ENCODE measurements at regions of chr19 and their contacts with region 1.

Region 1: DNA sequence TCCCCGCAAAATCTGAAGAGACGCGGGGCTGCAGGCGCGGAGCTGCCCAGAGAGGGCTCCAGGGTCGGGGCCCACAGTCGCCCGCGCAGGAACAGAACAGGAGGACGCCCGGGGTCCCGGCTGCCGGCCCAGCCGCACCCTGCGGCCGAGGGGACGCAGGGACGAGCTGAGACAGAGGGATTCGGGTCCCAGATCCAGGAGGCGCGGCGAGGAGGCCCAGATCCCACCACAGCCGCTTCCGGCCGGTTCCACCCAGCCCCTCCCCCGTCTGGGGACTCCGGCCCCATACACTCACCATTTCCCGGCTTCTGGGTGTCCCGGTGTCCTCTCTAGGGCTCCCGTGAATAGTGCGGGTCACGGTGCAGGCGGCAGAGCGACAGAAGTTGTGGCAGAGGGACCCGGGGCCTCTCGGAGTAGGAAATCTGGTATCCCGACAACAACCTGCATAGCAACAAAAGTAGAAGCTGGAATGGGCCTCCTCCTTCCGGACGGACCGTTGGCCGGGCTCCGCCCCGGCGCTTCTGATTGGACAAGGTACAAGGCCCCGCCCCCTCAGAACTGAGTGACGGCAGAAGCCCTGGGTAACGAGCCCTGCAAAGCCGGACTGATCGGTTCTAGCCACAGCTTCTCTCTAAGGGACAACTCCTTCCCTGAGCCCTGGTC is at the start of gene ZNF20:
- DNase-seq: peak; percentile 74 to 94 (median 84)
- ATAC-seq: peak; percentile 85
- H3K4me3 ChIP-seq: peak within 1 kb of the TSS; percentile 97
- H3K4me3 Mint-ChIP-seq: peak within 1 kb of the TSS; percentile 88
- H3K27ac ChIP-seq: peak within 1 kb of the TSS in 1 of 2 donors; percentile 44
- H3K27ac Mint-ChIP-seq: peak within 1 kb of the TSS; percentile 47
- H3K4me1 ChIP-seq: peaks cover 36% of the 10 kb centered on the region
- H3K4me1 Mint-ChIP-seq: peaks cover 43% of the 10 kb centered on the region
- H3K27me3 ChIP-seq: no peaks in the 10 kb centered on the region
- H3K27me3 Mint-ChIP-seq: no peaks in the 10 kb centered on the region
- CTCF ChIP-seq: no peak
- total RNA-seq, gene ZNF20: 1.0 to 1.2 TPM

Region 2: GRCh38 chr19:11694533-11695439 is 445.2 kb before region 1 on chr19:
- CTCF ChIA-PET with region 1: no interaction called
- POLR2A ChIA-PET with region 1: no interaction called
- intact Hi-C with region 1: loop called in 1 of 2 experiments (anchors 5 kb)
- DNase-seq: peak; percentile 51 to 87 (median 74)
- ATAC-seq: peak; percentile 99
- H3K4me3 ChIP-seq: peak overlapping the region; percentile 60
- H3K4me3 Mint-ChIP-seq: peak overlapping the region; percentile 96
- H3K27ac ChIP-seq: no peak overlapping the region
- H3K27ac Mint-ChIP-seq: no peak overlapping the region
- H3K4me1 ChIP-seq: peaks cover 18% of the 10 kb centered on the region
- H3K4me1 Mint-ChIP-seq: peaks cover 16% of the 10 kb centered on the region
- H3K27me3 ChIP-seq: peaks cover 24 to 32% of the 10 kb centered on the region in 2 experiments
- H3K27me3 Mint-ChIP-seq: peaks cover 42% of the 10 kb centered on the region
- CTCF ChIP-seq: no peak

Region 3: GRCh38 chr19:11798391-11799330 is 341.4 kb before region 1 on chr19 and contains the start of gene ZNF491:
- CTCF ChIA-PET with region 1: interaction called, 10 read pairs
- POLR2A ChIA-PET with region 1: no interaction called
- intact Hi-C with region 1: loop called (anchors 1 kb)
- DNase-seq: peak; percentile 64 to 91 (median 80)
- ATAC-seq: peak; percentile 98
- H3K4me3 ChIP-seq: peak within 1 kb of the TSS; percentile 73
- H3K4me3 Mint-ChIP-seq: peak within 1 kb of the TSS; percentile 93
- H3K27ac ChIP-seq: peak within 1 kb of the TSS; percentile 17
- H3K27ac Mint-ChIP-seq: peak within 1 kb of the TSS; percentile 79
- H3K4me1 ChIP-seq: peaks cover 22% of the 10 kb centered on the region
- H3K4me1 Mint-ChIP-seq: peaks cover 22% of the 10 kb centered on the region
- H3K27me3 ChIP-seq: no peaks in the 10 kb centered on the region
- H3K27me3 Mint-ChIP-seq: no peaks in the 10 kb centered on the region
- CTCF ChIP-seq: no peak
- total RNA-seq, gene ZNF491: 0.41 to 1.1 TPM

Region 4: DNA sequence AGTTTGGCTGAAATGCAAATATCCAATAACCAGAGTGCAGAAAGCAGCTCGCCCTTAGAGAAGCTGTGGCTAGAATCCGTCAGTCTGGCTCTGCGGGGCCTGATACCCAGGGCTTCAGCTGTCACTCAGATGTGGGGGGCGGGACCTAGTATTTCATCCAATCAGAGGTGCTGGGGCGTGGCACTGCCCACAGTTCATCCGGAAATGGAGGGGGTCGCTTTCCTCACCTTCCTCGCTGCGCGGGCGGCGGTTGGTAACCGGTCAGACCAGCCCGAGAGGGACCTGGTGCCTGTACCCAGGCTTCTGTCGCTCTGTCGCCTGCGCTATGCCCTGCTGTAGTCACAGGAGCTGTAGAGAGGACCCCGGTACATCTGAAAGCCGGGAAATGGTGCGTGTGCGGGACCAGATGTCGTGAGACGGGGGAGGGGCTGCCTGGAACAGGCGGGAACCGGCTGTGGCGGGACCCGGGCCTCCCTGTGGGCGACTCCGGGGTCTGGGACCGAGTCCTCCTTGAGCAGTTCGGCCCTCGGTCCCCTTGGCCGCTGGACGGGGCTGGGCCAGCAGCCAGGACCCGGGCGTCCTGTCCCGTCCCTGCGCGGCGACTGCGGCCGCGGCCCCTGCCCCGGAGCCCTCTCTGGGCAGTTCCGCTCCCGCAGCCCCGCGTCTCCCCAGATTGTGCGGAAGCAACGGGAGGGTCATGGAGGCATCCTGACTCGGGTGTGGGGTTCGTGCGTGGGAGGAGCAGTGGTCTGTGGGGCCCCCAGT is 214.9 kb before region 1 on chr19 and contains the start of gene ZNF700:
- CTCF ChIA-PET with region 1: interaction called, 29 read pairs
- POLR2A ChIA-PET with region 1: interaction called, 7 read pairs
- intact Hi-C with region 1: loop called (anchors 1 kb)
- DNase-seq: peak; percentile 82 to 94 (median 89)
- ATAC-seq: peak; percentile 86
- H3K4me3 ChIP-seq: peak within 1 kb of the TSS; percentile 96
- H3K4me3 Mint-ChIP-seq: peak within 1 kb of the TSS; percentile 98
- H3K27ac ChIP-seq: peak within 1 kb of the TSS; percentile 88 to 90
- H3K27ac Mint-ChIP-seq: peak within 1 kb of the TSS; percentile 96
- H3K4me1 ChIP-seq: peaks cover 43% of the 10 kb centered on the region
- H3K4me1 Mint-ChIP-seq: peaks cover 42% of the 10 kb centered on the region
- H3K27me3 ChIP-seq: no peaks in the 10 kb centered on the region
- H3K27me3 Mint-ChIP-seq: no peaks in the 10 kb centered on the region
- CTCF ChIP-seq: no peak
- total RNA-seq, gene ZNF700: 13.2 to 14.5 TPM

Region 5: DNA sequence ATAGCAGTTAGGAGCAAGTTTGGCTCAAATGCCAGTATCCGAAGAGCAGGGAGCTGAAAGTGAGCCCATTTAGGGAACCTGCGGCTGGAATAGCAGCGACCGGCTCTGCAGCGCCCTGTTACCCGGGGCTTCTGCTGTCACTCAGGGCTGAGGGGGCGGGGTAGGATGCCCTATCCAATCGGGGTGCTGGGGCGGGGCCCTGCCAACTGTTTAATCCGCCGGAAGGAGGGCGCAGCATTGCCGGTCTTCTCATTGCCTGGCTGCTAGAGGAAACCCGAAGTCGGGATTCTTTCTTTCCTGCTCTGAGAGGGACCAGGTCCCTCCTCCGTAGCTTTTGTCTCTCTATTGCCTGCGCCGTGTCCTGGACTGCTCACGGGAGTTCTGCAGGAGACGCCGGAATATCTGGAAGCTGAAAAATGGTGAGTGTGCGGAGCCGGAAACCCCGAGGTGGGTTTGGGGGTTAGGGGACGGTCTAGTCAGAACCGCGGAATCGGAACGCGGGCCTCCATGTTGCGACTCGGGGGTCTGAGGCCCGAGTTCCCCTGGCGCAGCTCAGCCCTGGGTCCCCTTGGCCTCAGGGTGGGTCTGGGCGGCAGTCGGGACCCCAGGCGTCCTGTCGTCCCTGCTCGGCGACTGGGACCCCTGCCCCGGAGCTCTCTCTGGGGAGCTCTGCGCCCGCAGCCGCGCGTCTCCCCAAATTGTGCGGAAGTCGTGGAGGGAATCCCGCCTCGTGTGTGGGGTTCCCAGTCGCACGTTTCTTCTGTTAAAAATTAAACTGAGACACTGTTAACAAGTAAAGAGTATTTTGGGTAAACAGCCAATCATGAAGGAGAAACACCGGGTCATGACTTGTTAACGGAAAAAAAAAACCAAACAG is 152.4 kb before region 1 on chr19:
- CTCF ChIA-PET with region 1: interaction called, 17 read pairs
- POLR2A ChIA-PET with region 1: no interaction called
- intact Hi-C with region 1: loop called in 1 of 2 experiments (anchors 2 kb)
- DNase-seq: peak; percentile 82 to 95 (median 90)
- ATAC-seq: peak; percentile 91
- H3K4me3 ChIP-seq: peak overlapping the region; percentile 100
- H3K4me3 Mint-ChIP-seq: peak overlapping the region; percentile 88
- H3K27ac ChIP-seq: peak overlapping the region; percentile 86 to 91
- H3K27ac Mint-ChIP-seq: peak overlapping the region; percentile 92
- H3K4me1 ChIP-seq: peaks cover 21% of the 10 kb centered on the region
- H3K4me1 Mint-ChIP-seq: peaks cover 34% of the 10 kb centered on the region
- H3K27me3 ChIP-seq: peaks cover 0 to 2% of the 10 kb centered on the region in 2 experiments
- H3K27me3 Mint-ChIP-seq: no peaks in the 10 kb centered on the region
- CTCF ChIP-seq: no peak

Region 6: GRCh38 chr19:12092065-12092867 is 47.8 kb before region 1 on chr19:
- CTCF ChIA-PET with region 1: interaction called, 11 read pairs
- POLR2A ChIA-PET with region 1: no interaction called
- intact Hi-C with region 1: loop called (anchors 2 to 5 kb)
- DNase-seq: peak in 12 of 14 experiments; percentile 2 to 65 (median 26)
- ATAC-seq: peak; percentile 65
- H3K4me3 ChIP-seq: peak overlapping the region; percentile 55
- H3K4me3 Mint-ChIP-seq: peak overlapping the region; percentile 88
- H3K27ac ChIP-seq: no peak overlapping the region
- H3K27ac Mint-ChIP-seq: no peak overlapping the region
- H3K4me1 ChIP-seq: peaks cover 13% of the 10 kb centered on the region
- H3K4me1 Mint-ChIP-seq: peaks cover 12% of the 10 kb centered on the region
- H3K27me3 ChIP-seq: no peaks in the 10 kb centered on the region
- H3K27me3 Mint-ChIP-seq: peaks cover 7% of the 10 kb centered on the region
- CTCF ChIP-seq: no peak